Dorsolateral prefrontal cortex (tissue), 120 donors: ENCODE measurements at regions of chr1 and their contacts with region 1.

Region 1: DNA sequence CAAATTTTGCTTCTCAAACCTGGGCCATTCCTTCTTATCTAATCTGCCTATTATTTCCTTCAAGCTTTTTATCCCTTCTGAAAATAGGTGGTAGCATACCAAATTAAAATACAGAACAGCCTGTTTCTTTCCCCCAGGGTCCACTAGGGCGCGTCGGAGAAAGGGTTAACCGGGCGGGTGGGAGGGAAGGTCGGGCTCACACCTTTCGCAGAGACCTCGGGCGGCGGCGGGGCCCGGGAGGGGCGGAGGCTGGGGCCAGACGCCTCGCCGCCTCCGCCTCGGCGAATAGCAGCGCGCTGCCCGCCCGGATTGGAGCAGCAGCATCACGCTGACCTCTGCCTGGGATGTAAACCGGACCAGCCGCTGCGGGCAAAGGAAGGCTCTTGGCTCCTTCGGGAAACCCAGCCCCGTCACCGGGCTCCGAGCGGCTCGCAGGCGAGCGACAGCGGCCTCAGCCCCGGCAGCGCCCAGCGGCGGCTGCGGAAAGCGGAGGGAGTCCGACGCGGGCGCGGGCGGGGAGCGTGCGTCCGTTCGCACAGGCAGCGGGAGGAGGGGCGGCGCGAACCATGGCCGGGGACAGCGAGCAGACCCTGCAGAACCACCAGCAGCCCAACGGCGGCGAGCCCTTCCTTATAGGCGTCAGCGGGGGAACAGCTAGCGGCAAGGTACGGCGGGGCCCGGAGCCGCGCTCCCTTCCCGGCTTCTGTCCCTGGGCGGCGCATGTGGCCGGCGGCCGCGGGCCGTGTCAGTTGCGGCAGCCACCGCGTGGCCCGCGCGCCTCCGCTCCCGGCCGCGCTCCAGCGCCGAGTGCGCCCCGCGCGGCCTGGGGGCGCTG is at the start of gene UCK2:
- DNase-seq: peak; percentile 54 to 84 (median 71)
- H3K4me3 ChIP-seq: peak within 1 kb of the TSS; percentile 59 to 97 (median 83)
- H3K27ac ChIP-seq: peak within 1 kb of the TSS; percentile 40 to 97 (median 91)
- H3K27me3 ChIP-seq: no peaks in the 10 kb centered on the region
- CTCF ChIP-seq: peak in 26 of 56 donors; percentile 4 to 37 (median 18)
- total RNA-seq, gene UCK2: 19.0 to 35.8 (median 26.0) TPM

Region 2: GRCh38 chr1:165697881-165698760 is 129.4 kb before region 1 on chr1 and contains the start of gene ALDH9A1:
- intact Hi-C with region 1: loop called (anchors 5 to 10 kb)
- DNase-seq: peak; percentile 70 to 94 (median 87)
- H3K4me3 ChIP-seq: peak within 1 kb of the TSS; percentile 53 to 98 (median 84)
- H3K27ac ChIP-seq: peak within 1 kb of the TSS; percentile 63 to 99 (median 91)
- H3K27me3 ChIP-seq: no peaks in the 10 kb centered on the region
- CTCF ChIP-seq: peak in 54 of 56 donors; percentile 4 to 66 (median 44)
- total RNA-seq, gene ALDH9A1: 29.9 to 85.0 (median 47.9) TPM

Region 3: DNA sequence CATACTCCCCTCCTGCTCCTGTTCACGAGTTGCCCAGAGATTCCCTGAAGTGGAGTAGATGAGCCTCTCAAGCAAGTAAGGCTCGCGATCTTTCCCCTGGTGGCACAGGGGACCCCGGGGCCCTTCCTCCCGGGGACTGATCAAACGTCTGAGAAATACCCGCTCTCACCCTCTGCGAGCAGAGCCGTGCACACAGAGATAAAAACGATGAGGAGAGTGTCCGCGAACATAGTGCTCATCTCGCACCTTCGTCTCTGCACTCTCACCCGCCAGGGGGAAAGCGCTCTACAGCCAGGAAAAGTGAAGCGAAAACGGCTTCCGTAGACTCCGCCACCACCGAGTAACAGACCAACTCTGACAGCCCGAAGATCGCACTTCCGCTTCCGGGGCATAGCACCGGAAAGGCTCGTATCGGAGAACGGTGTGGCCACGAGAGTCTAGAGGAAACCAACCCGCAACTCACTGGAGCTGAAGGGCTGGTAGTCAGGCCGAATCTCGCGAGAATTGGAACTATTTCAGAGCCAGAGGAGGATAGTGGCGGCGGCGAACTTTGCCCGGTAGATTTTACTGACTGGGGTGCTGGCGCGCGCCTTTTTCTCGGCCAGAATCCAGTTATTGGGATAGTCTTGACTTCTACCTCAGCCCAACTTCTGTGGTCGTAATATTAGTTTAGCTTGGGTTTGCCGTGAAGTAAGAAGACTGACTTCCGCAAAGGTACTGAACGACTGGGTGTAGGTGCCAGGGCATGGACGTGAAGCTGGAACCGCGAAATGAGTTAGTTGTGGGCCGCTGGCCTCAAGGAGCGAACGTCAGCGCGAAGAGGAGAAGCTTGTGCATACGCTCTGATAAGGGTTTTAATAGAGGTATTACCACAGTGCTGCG is 58.7 kb before region 1 on chr1 and contains the start of gene TMCO1:
- intact Hi-C with region 1: loop called (anchors 5 kb)
- DNase-seq: peak; percentile 96 to 100 (median 98)
- H3K4me3 ChIP-seq: peak within 1 kb of the TSS; percentile 50 to 97 (median 83)
- H3K27ac ChIP-seq: peak within 1 kb of the TSS in 55 of 59 donors; percentile 4 to 90 (median 72)
- H3K27me3 ChIP-seq: no peaks in the 10 kb centered on the region
- CTCF ChIP-seq: peak in 44 of 56 donors; percentile 11 to 60 (median 33)
- total RNA-seq, gene TMCO1: 37.8 to 74.4 (median 56.4) TPM

Region 4: DNA sequence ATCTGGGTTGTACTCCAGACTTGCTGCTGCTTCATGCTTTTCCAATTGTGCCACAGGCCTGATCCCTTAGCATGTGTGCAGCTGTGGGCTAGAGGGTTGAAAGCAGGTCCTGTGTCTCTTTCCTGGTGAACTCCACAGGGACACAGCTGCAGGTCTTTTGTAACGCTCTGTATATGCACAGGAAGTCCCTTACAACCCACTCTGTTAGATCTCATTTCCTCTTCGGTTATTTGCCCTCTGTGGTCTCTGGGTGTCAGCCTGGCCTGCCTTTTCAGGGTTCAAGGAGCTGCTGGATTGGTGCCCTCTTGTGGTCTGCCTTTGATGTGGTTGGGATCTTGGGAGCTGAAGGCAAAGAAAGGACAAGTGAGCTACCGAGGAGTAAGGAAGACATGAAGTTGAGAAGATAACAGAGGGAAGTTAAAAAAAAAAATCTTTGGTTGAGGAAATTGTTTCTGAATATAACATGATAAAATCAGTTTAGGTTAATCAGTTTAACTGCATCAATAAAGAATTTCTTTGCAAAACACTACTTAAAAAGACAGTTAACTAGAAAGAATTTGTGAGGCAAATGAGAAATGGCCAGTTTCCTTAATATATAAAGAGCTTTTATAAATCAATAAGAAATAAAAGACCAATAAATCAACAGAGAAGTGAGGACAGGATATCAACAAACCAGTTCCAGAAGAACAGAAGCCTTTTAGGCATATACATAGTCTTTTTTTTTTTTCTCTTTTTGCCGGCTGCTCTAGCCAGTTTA is 44.0 kb after region 1 on chr1:
- intact Hi-C with region 1: loop called in 1 of 2 experiments (anchors 1 kb)
- DNase-seq: peak in 4 of 10 donors; percentile 18 to 67 (median 44)
- H3K4me3 ChIP-seq: no peak overlapping the region
- H3K27ac ChIP-seq: no peak overlapping the region
- H3K27me3 ChIP-seq: no peaks in the 10 kb centered on the region
- CTCF ChIP-seq: peak in 54 of 56 donors; percentile 15 to 68 (median 46)

Region 5: DNA sequence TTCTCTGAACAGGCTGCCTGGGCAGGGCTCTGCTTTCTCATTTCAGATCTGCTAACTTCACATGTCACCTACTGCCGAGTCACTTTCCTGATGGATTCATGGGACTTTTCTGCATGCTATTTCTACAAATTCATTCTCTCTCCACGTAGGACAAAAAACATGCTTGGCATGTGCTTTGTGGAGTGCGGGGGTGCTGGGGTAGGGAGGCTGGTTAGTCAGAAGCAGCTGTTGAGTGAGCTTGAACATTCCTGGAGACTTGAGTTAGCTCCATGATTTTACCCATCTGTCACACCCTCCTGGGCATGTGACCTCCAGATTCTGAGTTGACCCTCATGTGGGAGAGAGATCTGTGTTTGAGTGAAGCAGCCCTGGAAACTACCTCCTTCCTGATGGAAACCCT is 71.4 kb after region 1 on chr1:
- intact Hi-C with region 1: loop called in 1 of 2 experiments (anchors 5 kb)
- DNase-seq: peak in 2 of 10 donors; percentile 24 to 50
- H3K4me3 ChIP-seq: no peak overlapping the region
- H3K27ac ChIP-seq: peak overlapping the region in 13 of 59 donors; percentile 5 to 69 (median 37)
- H3K27me3 ChIP-seq: no peaks in the 10 kb centered on the region
- CTCF ChIP-seq: no peak